Uterus (tissue), 4 donors: ENCODE measurements at regions of chr4 and their contacts with region 1.

Region 1: GRCh38 chr4:38319456-38320342 is 344.3 kb upstream of the KLF3 start:
- DNase-seq: peak; percentile 95 to 98
- H3K4me3 ChIP-seq: peak overlapping the region; percentile 21 to 26
- H3K27ac ChIP-seq: peak overlapping the region; percentile 85 to 96
- H3K4me1 ChIP-seq: no peaks in the 10 kb centered on the region
- H3K27me3 ChIP-seq: no peaks in the 10 kb centered on the region
- CTCF ChIP-seq: peak; percentile 89 to 99 (median 96)
- POLR2A ChIP-seq: no peak

Region 2: DNA sequence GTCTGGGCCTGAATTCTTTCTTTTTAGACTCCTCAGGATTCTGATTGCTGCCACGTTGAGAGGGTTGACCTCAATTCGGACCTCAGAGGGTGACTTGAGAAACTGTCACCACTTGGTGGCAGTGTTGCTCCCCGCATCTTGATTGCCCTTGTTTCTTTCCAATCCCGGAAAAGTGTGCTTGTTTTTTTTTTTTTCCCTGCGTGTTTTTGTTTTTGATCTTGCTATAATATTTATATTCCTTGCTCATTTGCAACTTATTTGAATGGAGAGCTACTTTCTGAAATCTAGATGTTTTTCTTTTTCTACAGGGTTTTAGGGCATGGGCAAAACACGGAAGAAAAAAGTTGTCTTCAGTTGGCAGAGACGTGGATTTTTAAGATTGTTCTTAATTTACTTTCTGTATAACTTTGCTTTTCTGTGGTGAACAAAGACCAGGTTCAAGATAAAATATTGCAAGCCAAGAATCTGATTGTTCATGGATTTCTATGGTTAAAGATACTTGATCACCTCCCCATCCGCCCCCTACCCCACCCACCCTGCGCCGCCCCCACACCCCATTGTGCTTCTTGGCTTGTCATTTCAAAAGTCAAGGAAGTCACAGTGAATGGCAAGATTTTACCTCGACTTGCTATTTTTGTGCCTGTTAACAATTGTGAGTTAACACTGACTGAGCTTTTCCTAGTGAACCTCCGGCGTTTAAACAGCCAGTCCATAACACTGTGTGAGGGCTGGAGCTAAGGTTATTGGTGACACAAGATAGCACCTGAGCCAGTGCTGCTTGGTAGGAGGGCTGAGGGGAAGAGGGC is 257.4 kb before region 1 on chr4:
- intact Hi-C with region 1: loop called (anchors 10 kb)
- DNase-seq: peak; percentile 80 to 87
- H3K4me3 ChIP-seq: peak overlapping the region in 1 of 2 donors; percentile 33
- H3K27ac ChIP-seq: peak overlapping the region; percentile 74 to 88
- H3K4me1 ChIP-seq: peaks cover 9 to 10% of the 10 kb centered on the region in 2 donors
- H3K27me3 ChIP-seq: no peaks in the 10 kb centered on the region
- CTCF ChIP-seq: peak; percentile 68 to 86 (median 80)
- POLR2A ChIP-seq: no peak